ENCODE measurements at regions of chr6 and their contacts with region 1.

Region 1: DNA sequence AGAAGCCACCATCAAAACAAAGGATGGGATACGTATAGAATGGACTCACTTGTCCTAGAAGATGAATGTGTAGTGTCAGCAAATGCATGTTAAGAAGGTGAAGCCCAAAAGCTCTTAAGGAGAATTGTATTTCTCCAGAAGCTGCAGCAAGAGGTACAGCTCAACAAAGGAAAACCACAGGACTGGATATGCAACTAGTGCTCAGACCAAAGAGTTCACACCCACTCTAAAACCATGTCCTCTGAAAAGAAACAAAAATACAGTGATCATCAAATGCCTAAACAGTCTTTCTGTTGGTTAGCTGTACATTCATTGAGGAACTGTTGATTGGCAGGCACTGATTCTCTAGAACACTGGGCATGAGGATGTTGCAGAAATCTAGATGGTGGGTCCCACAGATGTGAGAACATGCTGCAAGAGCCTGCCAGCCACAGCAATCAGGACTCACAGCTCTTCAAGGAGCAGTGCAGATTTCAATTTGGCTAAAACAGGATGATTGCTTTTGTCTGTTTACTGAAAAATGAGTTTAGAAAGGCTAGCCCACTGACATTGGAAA is 94.6 kb downstream of the COL9A1 start:
- DNase-seq: no peak
- H3K4me3 Mint-ChIP-seq: no peak overlapping the region
- H3K27ac Mint-ChIP-seq: no peak overlapping the region
- H3K4me1 Mint-ChIP-seq: no peaks in the 10 kb centered on the region
- H3K27me3 Mint-ChIP-seq: peaks cover 6% of the 10 kb centered on the region

Region 2: DNA sequence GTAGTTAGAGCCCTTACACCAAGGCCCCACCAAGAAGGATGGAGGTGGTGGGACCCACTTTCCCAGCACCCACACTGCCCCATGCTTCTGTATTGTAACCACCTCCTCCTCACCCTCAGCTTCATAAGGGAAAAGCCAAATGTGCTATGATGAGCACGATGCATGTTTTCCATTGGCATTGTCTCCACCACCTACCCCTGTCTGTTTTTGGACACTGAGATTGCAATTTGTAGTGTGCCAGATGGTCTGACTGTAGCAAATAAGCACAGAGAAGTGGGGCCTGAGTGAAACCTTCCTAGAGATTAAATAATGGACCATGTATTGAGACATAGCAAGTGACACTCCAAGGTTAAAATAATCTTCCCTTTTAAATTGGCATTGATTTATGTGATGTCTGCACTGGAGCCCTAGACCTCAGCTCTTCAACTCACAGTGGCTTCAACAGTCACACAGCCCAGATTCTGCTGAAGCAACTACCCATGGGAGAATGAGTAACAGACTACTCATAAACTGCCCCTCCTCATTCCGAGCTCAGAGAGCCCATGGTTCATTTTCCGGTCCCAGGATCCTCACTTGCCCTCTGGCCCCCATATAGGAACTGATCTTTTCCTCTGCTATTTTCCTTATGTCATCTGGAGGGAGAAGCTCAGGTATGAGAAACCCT is 83.3 kb before region 1 on chr6:
- CTCF ChIA-PET with region 1: no interaction called
- POLR2A ChIA-PET with region 1: interaction called, 11 read pairs
- DNase-seq: no peak
- H3K4me3 Mint-ChIP-seq: no peak overlapping the region
- H3K27ac Mint-ChIP-seq: no peak overlapping the region
- H3K4me1 Mint-ChIP-seq: no peaks in the 10 kb centered on the region
- H3K27me3 Mint-ChIP-seq: no peaks in the 10 kb centered on the region